Head of caudate nucleus (tissue), 42 donors: ENCODE measurements at regions of chr3 and their contacts with region 1.

Region 1: DNA sequence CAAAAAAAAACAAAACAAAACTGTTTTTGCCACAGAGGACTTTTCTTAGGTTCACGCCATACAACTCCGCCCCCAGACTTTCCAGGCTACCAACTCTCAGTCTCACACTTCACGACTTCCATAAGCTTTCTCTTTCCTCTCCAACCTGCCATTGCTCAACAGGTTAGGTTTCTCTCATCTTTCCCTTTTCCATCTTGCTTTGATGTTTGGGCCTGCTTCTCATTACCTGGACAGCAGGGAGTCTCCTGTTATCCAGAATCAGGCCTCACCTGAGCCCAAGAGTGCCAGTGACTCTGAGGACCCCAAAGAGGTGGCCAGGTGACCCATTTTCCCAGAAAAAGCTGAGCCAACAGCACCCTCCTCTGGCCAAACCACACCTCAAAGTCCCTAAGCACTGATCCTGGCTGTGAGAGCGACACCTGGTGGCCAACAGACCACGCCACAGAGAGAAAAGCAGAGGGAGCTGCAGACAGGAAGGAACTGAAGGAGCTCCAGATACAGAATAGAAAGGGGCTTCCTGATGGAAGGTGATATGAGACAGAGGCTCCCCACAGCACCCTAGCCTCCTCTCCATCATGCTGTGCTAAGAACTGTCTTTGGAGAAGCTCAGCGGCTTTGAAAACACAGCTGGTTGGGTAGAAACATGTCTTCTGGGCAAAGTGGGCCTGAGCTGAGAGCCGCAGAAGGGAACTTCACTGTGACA is 4.0 kb downstream of the CCDC51 start:
- DNase-seq: peak; percentile 71 to 97 (median 92)

Region 2: DNA sequence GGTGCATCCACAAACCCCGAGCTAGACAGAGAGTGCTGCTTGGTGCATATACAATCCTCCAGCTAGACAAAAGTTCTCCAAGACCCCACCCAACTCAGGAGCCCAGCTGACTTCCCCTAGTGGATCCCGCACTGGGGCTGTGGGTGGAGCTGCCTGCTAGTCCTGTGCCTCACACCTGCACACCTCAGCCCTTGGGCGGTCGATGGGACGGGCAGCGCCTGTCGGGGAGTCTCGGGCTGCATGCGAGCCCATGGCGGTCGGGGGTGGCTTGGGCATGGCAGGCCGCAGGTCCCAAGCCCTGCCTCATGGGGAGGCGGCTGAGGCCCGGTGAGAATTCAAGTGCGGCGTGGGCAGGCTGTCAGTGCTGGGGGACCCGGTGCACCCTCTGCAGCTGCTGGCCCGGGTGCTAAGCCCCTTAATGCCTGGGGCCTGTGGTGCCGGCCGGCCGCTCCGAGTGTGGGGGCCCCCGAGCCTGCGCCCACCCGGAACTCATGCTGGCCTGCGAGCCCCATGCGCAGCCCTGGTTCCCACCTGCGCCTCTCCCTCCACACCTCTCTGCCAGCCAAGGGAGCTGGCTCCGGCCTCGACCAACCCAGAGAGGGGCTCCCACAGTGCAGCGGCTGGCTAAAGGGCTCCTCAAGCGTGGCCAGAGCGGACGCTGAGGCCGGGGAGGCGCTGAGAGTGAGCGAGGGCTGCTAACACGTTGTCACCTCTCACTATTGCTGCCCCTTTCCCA is 164.0 kb before region 1 on chr3:
- intact Hi-C with region 1: loop called (anchors 2 kb)
- DNase-seq: no peak

Region 3: DNA sequence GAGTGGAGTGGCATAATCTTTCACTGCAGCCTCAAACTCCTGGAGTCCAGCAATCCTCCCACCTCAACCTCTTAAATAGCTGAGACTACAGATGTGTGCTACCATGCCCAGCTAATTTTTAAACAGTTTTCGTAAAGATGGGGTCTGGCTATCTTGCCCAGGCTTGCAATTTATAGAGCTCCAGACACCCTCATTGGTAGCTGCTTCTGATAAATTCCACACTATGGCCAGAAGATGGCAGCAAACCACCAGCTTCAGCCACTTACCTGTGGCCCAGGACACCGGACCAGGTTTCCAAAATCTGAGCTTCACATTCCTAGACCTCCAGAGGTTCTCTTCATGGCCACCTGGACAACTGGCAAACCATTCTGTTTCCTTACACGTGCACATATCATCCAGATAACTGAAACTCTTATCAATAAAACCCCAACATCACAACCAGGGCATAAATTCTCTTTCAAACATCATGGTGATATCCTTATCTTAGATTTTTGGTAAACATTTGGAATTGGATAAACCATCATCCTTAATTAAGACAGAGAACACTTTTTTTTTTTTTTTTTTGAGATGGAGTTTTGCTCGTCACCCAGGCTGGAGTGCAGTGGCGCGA is 35.0 kb before region 1 on chr3:
- intact Hi-C with region 1: loop called (anchors 2 kb)
- DNase-seq: peak in 39 of 42 donors; percentile 38 to 85 (median 65)